Caco-2 (cell line): ENCODE measurements at regions of chr1 and their contacts with region 1.

Region 1: DNA sequence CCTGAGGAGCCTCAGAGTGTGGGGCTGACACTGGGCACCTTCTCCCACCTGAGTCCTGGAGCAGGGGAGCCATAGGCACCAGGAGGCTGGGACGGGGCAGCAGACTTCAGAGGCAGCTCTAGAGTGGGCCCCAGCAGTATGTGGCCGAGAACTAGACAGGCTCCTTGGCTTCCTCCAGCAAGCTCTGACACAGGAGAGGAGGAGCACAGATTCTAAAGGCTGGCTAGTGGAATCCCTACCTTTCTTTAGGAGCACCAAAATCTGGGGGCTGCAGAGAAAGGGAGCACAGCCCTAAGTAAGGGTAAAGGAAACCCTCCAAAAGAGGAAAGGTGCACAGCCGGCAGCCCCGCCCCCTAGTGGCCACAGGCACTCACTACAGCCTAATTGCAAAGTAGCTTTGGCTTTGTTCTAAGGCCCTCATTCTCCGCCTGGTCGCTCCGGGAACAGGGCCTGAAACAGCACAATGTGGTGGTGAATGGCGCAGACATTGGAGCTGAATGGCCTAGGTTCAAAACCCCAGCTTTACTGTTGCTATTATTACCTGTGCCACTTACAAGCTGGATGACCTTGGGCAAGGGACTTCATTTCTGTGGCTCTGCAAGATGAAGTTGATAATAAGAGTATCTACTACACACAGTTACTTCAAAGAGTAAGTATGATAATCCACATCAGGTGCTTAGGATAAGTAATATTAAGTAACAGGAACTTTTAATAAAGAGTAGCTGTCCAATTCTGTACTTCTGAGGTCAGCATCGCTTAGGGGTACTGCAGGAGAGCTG is 8.8 kb upstream of the GUCA2A start:
- DNase-seq: peak in 1 of 2 experiments; percentile 69
- H3K4me3 ChIP-seq: no peak overlapping the region
- H3K4me3 Mint-ChIP-seq: no peak overlapping the region
- H3K27ac Mint-ChIP-seq: no peak overlapping the region
- H3K4me1 ChIP-seq: peaks cover 7% of the 10 kb centered on the region
- H3K4me1 Mint-ChIP-seq: peaks cover 9% of the 10 kb centered on the region
- H3K27me3 ChIP-seq: no peaks in the 10 kb centered on the region
- H3K27me3 Mint-ChIP-seq: no peaks in the 10 kb centered on the region
- CTCF ChIP-seq: peak; percentile 84 to 88

Region 2: GRCh38 chr1:42146626-42147320 is 26.6 kb before region 1 on chr1:
- CTCF ChIA-PET with region 1: interaction called, 6 read pairs
- POLR2A ChIA-PET with region 1: no interaction called
- intact Hi-C with region 1: loop called (anchors 1 kb)
- DNase-seq: peak; percentile 89
- H3K4me3 ChIP-seq: no peak overlapping the region
- H3K4me3 Mint-ChIP-seq: no peak overlapping the region
- H3K27ac Mint-ChIP-seq: no peak overlapping the region
- H3K4me1 ChIP-seq: peaks cover 7% of the 10 kb centered on the region
- H3K4me1 Mint-ChIP-seq: no peaks in the 10 kb centered on the region
- H3K27me3 ChIP-seq: no peaks in the 10 kb centered on the region
- H3K27me3 Mint-ChIP-seq: peaks cover 7% of the 10 kb centered on the region
- CTCF ChIP-seq: peak; percentile 75 to 89

Region 3: DNA sequence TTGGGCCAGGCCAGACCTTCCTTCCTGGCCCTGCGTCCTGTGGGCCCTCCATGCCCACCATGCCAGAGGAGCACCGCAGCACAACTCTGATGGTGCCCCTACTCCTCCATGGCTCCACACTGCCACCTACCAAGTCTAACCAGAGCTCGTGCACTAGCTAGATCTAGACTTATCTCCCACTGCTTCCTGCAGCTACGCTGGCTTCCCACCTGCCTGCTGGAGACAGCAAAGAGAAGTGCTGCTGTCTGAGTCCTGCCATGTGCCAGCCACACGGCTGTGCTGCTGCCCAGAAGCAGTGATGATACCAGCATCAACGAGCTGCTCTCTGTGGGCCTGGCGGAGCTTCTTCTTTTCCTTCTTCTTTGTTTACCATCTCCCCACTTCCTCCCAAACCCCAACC is 15.7 kb before region 1 on chr1:
- CTCF ChIA-PET with region 1: no interaction called
- POLR2A ChIA-PET with region 1: no interaction called
- intact Hi-C with region 1: no loop called
- DNase-seq: no peak
- H3K4me3 ChIP-seq: no peak overlapping the region
- H3K4me3 Mint-ChIP-seq: no peak overlapping the region
- H3K27ac Mint-ChIP-seq: no peak overlapping the region
- H3K4me1 ChIP-seq: peaks cover 7% of the 10 kb centered on the region; the same call in 1 of the 2 replicates
- H3K4me1 Mint-ChIP-seq: peaks cover 7% of the 10 kb centered on the region
- H3K27me3 ChIP-seq: no peaks in the 10 kb centered on the region
- H3K27me3 Mint-ChIP-seq: no peaks in the 10 kb centered on the region
- CTCF ChIP-seq: no peak

Region 4: DNA sequence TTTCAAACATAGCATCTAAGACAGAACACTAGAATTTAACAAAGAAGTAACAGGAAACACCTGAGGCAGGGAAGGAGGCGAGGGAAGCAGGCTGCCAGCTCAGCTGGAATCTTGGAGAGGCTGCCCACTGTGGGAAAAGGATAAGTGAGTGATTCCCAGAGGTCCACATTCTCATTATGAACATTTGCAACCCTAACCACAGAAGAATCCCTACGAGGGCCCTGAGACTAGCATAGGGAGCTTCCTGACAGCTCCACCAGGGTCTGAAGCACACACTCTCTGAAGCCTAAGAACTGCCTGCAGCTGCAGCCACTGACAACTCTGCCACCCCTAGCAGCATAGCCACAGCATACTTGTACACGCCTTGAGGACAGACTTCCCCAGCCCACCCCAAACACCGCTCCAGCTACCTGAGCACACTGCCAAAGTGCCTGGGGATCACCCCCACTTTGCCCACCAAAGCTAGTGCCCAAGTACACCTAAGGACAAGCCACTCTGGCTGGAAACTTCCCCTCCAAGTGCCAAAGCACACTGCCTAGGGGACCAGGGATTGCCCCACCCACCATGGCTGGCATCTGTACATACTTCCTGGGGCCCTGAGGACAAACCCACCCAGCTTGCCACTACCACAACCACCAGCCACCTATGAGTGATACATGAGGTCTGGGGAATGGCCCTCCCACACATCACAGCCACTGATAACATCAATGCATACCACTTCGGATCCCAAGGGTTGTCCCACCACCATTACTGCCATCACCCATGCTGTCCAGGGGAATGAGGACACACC is 67.8 kb after region 1 on chr1:
- CTCF ChIA-PET with region 1: no interaction called
- POLR2A ChIA-PET with region 1: no interaction called
- intact Hi-C with region 1: no loop called
- DNase-seq: no peak
- H3K4me3 ChIP-seq: no peak overlapping the region
- H3K4me3 Mint-ChIP-seq: no peak overlapping the region
- H3K27ac Mint-ChIP-seq: no peak overlapping the region
- H3K4me1 ChIP-seq: no peaks in the 10 kb centered on the region
- H3K4me1 Mint-ChIP-seq: no peaks in the 10 kb centered on the region
- H3K27me3 ChIP-seq: no peaks in the 10 kb centered on the region
- H3K27me3 Mint-ChIP-seq: no peaks in the 10 kb centered on the region
- CTCF ChIP-seq: no peak

Region 5: GRCh38 chr1:42319128-42319851 is 145.9 kb after region 1 on chr1:
- CTCF ChIA-PET with region 1: interaction called, 3 read pairs
- POLR2A ChIA-PET with region 1: no interaction called
- intact Hi-C with region 1: loop called (anchors 10 kb)
- DNase-seq: no peak
- H3K4me3 ChIP-seq: no peak overlapping the region
- H3K4me3 Mint-ChIP-seq: no peak overlapping the region
- H3K27ac Mint-ChIP-seq: no peak overlapping the region
- H3K4me1 ChIP-seq: peaks cover 17% of the 10 kb centered on the region; the same call in 1 of the 2 replicates
- H3K4me1 Mint-ChIP-seq: peaks cover 33% of the 10 kb centered on the region
- H3K27me3 ChIP-seq: no peaks in the 10 kb centered on the region
- H3K27me3 Mint-ChIP-seq: no peaks in the 10 kb centered on the region
- CTCF ChIP-seq: no peak

Region 6: DNA sequence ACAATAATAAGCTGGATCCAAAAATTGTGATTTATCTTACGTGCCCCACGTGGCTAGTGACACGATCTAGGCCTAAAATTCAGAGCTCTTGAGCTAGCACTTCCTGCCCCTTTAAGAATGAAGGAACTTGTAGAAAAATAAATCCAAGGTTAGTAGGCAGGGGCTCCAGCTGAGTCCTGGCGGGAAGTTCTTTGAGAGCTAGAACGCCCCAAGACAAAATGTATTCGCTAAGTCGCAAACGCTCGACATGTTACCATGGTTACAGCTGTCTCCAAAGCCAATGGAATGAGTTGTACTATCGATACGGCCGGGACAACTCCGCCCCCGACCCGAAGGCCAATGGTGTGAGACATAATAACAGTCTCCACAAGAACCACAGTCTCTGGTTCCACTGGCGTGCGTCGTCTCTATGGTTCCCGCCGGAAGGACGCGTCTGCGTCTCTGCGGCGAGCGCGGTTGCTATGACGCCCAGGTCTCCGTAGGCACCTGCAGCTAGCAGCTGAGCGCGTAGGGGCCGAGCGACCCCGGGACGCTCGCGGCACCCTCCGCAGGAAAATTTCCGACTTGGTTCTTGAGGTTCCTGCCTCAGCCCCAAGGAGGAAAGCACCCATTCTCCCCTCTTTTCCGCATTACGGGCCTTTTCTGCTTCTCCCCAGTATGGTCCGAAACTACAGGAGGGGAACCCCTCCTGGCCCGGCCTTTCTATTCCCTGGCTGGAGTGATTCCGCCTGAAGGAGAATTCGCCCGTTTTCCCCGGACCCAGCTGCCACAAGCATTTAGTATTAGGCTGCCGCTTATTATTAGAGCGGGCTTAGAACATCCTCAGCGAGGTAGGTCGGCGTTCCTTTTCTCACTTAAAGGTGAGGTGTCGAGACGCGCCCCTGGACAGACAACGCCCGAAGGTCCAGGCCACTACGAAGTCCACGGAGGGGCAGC is 289.8 kb after region 1 on chr1 and contains the start of gene CCDC30:
- CTCF ChIA-PET with region 1: no interaction called
- POLR2A ChIA-PET with region 1: no interaction called
- intact Hi-C with region 1: loop called (anchors 10 kb)
- DNase-seq: peak; percentile 95 to 96
- H3K4me3 ChIP-seq: peak within 1 kb of the TSS; percentile 38
- H3K4me3 Mint-ChIP-seq: peak within 1 kb of the TSS; percentile 72
- H3K27ac Mint-ChIP-seq: peak within 1 kb of the TSS; percentile 81
- H3K4me1 ChIP-seq: peaks cover 14% of the 10 kb centered on the region; the same call in 1 of the 2 replicates
- H3K4me1 Mint-ChIP-seq: peaks cover 21% of the 10 kb centered on the region
- H3K27me3 ChIP-seq: no peaks in the 10 kb centered on the region
- H3K27me3 Mint-ChIP-seq: no peaks in the 10 kb centered on the region
- CTCF ChIP-seq: no peak
- total RNA-seq, gene CCDC30: 1.3 and 1.4 TPM in 2 replicates